K562 (cell line): ENCODE measurements at regions of chr2 and their contacts with region 1.

Region 1: DNA sequence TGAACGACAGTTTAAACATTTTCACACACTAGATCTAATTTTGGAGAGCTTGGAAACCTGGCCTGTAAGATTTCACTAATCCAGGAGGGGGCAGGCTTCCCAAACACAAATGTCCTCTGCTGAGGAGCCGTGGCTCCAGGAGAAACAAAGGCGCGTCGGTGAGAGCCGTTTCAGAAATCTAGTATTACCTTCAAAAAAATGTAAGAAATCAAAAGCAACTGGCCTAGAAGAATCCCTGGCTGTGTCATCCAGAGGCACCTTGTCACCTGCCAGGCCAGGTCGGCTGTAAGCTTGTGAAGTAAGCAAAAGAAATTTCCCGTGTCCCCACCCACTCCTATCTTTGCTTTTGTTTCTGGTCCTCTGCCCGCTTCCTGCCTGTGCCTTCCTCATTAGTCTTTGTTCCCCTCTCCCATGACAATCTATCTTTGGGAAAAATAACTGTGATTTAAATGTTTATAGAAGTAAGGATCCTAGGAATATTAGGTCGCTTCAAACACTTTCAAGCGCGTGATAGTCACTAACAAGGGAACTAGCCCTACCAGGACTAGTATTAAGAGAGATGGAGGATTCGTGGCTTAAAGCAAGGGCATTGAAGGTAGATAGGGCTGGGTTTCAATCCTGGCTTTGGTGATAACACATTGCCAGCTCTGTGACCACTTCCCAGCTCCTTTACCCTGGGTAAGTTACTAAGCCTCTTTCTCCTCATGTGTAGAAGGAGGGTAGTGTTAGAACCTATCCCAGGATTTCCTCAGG is 99.5 kb upstream of the STK39 start:
- DNase-seq: peak; percentile 69 to 84 (median 72)
- ATAC-seq: peak; percentile 91
- H3K4me3 ChIP-seq: peak overlapping the region; percentile 34
- H3K27ac ChIP-seq: no peak overlapping the region
- H3K4me1 ChIP-seq: no peaks in the 10 kb centered on the region; a peak in 1 of 5 replicates
- H3K27me3 ChIP-seq: 0 out of 5 replicates have a peak, but pooled peaks cover under 1 to 4% of the 10 kb centered on the region in 2 experiments
- CTCF ChIP-seq: peak; percentile 78 to 88 (median 83)
- EP300 ChIP-seq: 0 out of 2 replicates have a peak, but pooled peaks have one; percentile 13
- POLR2A ChIP-seq: no peak
- RAD21 ChIP-seq: peak; percentile 96 to 98

Region 2: DNA sequence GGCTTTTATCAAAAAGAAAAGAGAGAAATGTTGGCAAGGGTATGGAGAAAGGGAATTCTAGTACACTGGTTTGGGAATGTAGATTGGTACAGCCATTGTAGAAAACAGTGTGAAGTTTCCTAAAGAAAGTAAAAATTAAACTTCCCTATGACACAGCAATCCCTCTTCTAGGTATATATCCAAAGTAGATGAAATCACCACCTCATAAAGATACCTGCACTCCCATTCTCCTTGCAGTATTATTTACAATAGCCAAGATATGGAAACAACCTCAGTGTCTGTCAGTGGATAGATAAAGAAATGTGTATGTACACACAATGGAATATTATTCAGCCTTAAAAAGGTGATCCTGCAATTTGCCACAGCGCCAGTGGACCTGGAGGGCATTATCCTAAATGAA is 308.3 kb after region 1 on chr2:
- CTCF ChIA-PET with region 1: no interaction called
- POLR2A ChIA-PET with region 1: no interaction called
- in situ Hi-C with region 1: no loop called
- intact Hi-C with region 1: no loop called
- DNase-seq: no peak
- ATAC-seq: no peak
- H3K4me3 ChIP-seq: no peak overlapping the region
- H3K27ac ChIP-seq: no peak overlapping the region
- H3K4me1 ChIP-seq: no peaks in the 10 kb centered on the region
- H3K27me3 ChIP-seq: no peaks in the 10 kb centered on the region
- CTCF ChIP-seq: no peak
- EP300 ChIP-seq: no peak
- POLR2A ChIP-seq: no peak
- RAD21 ChIP-seq: no peak

Region 3: GRCh38 chr2:168687314-168687713 is 340.4 kb after region 1 on chr2:
- CTCF ChIA-PET with region 1: no interaction called
- POLR2A ChIA-PET with region 1: no interaction called
- in situ Hi-C with region 1: no loop called
- intact Hi-C with region 1: loop called (anchors 2 kb)
- DNase-seq: no peak
- ATAC-seq: no peak
- H3K4me3 ChIP-seq: no peak overlapping the region
- H3K27ac ChIP-seq: no peak overlapping the region
- H3K4me1 ChIP-seq: peaks cover 3 to 17% of the 10 kb centered on the region in 2 experiments; a peak in 4 of 5 replicates
- H3K27me3 ChIP-seq: no peaks in the 10 kb centered on the region
- CTCF ChIP-seq: peak in 1 of 3 experiments; percentile 41; a peak in 2 of 6 replicates
- EP300 ChIP-seq: no peak
- POLR2A ChIP-seq: no peak
- RAD21 ChIP-seq: peak; percentile 38 to 48; a peak in 3 of 4 replicates

Region 4: DNA sequence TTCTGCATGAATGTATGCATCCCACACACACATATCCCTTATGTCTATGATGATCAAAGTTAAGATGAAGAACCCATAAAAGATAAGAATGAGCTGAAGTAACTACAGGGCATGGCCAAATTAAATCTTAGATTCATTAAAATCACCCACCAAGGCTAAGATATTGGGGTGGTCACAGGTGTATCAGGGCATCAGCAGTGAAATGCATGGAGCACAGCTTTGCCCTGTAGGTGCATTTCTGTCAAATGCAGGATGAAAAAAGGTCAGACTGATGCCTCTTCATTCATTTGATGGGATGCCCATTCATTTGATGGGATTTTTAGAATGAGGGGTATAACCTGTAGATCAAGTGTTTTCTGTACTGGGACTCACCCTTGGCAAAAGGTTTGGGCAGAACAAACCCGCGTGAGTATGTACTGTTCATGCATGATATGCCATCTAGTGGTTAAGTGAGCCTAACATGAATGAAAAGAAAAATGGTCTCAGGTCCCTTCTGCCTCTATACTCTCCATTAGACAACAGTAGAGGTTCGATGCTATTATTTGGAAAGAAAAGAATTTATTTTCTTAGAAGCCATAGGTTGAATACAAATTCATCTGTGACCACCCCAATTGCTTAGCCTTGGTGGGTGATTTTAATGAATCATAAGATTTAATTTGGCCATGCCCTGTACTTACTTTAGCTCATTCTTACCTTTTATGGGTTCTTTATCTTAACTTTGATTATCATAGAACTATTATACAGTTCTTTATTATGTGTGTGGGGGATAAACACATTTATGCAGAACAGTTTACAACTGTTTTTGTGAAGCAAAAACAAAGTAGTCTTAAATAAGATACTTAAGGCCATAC is 412.3 kb after region 1 on chr2:
- CTCF ChIA-PET with region 1: interaction called, 6 read pairs
- POLR2A ChIA-PET with region 1: no interaction called
- in situ Hi-C with region 1: loop called (anchors 5 kb)
- intact Hi-C with region 1: loop called (anchors 1 kb)
- DNase-seq: peak in 2 of 4 experiments; percentile 54 to 64
- ATAC-seq: peak; percentile 89
- H3K4me3 ChIP-seq: no peak overlapping the region
- H3K27ac ChIP-seq: no peak overlapping the region
- H3K4me1 ChIP-seq: peaks cover 5 to 18% of the 10 kb centered on the region in 2 experiments; a peak in 4 of 5 replicates
- H3K27me3 ChIP-seq: no peaks in the 10 kb centered on the region
- CTCF ChIP-seq: peak; percentile 58 to 79 (median 66)
- EP300 ChIP-seq: no peak
- POLR2A ChIP-seq: no peak
- RAD21 ChIP-seq: peak; percentile 90 to 94

Region 5: DNA sequence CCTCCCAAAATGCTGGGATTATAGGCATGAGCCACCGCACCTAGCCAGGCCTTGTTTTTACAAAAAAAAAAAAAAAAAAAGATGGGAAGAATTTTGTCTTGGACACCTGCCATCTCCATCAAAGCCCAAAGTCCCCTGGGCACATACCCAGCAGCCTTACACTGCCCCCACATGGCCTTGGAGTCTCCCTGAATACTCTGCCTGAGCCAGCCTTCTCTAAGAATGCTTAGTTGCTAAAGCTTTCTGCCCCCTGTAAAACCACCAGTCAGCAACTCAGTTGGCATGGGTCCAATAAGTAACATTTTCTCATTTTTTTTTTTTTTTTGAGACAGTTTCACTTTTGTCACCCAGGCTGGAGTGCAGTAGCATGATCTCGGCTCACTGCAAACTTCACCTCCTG is 502.7 kb after region 1 on chr2:
- CTCF ChIA-PET with region 1: no interaction called
- POLR2A ChIA-PET with region 1: no interaction called
- in situ Hi-C with region 1: no loop called
- intact Hi-C with region 1: loop called (anchors 1 kb)
- DNase-seq: peak; percentile 47 to 66 (median 59)
- ATAC-seq: peak; percentile 44
- H3K4me3 ChIP-seq: no peak overlapping the region
- H3K27ac ChIP-seq: no peak overlapping the region
- H3K4me1 ChIP-seq: peaks cover 12 to 37% of the 10 kb centered on the region in 2 experiments
- H3K27me3 ChIP-seq: no peaks in the 10 kb centered on the region; a peak in 1 of 5 replicates
- CTCF ChIP-seq: peak; percentile 44 to 71 (median 52)
- EP300 ChIP-seq: 0 out of 2 replicates have a peak, but pooled peaks have one; percentile 11
- POLR2A ChIP-seq: no peak
- RAD21 ChIP-seq: peak; percentile 51 to 58

Region 6: DNA sequence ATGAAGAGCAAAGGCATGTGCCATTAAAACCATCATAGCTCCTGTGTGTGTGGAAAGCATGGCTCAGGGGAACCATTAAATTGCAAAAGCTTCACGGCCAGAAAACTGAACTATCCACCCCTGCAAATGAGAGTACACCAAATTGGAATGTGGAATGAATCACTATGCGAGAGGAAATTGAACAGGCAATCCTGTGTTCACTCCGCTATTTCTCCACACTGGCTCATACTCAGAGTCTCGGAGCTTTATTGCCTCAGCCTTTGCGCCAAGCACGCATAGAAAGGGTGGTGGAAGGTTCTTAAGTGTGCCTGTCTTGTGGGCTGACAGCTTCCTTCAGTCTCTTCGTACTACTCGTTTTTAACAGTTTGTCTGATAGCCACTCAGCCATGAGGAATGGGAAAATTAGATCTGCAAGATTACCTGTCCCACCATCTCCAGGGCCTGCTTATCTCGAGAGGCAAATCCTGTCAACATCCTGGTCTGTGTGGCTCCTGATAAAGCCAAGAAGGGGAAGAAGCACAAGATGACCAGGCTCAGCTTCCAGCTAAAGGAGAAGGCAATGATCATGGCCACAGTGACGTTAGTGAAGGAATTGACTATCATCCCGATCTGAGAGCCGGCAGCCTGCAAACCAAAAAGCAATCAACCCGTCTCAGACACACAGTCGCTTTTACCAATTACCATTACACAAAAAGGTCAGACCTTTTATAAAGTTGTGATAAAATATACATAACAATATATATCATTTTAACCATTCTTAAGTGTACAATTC is 589.1 kb after region 1 on chr2:
- CTCF ChIA-PET with region 1: no interaction called
- POLR2A ChIA-PET with region 1: no interaction called
- in situ Hi-C with region 1: no loop called
- intact Hi-C with region 1: loop called (anchors 5 kb)
- DNase-seq: peak; percentile 76 to 96 (median 85)
- ATAC-seq: peak; percentile 91
- H3K4me3 ChIP-seq: peak overlapping the region; percentile 1; the same call in 1 of the 2 replicates
- H3K27ac ChIP-seq: peak overlapping the region; percentile 78
- H3K4me1 ChIP-seq: peaks cover 5 to 53% of the 10 kb centered on the region in 2 experiments
- H3K27me3 ChIP-seq: no peaks in the 10 kb centered on the region
- CTCF ChIP-seq: peak in 1 of 3 experiments; percentile 8; a peak in 2 of 6 replicates
- EP300 ChIP-seq: peak; percentile 100
- POLR2A ChIP-seq: no peak
- RAD21 ChIP-seq: peak; percentile 34

Region 7: DNA sequence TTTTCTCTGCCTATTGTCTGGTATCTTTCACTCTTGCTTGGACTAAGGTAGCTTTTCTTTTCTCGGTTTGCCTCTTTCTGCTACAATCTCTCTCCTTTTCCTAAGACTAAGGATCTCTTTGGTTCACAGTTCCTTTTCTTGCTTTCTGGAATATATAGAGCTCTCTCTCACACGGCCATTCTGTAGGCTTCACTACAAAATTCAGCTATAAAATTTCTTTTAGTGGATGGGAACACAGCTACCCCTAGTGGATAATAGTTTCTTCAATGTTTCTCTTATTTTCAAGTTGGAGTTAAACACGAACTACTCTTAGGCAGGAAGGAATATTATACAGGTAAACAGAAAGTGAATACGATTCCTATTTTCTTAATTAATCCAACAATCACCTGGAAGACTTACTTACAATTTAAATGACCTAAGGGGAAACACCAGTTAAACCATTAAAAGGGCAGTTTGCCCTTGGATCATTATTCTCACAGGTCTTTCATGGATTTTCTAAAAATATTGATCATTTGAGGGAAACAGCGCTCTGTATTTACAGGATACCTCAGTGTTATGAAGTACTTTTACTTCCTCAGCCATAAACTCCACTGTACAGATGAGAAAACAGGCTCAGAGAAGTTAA is 875.0 kb after region 1 on chr2:
- CTCF ChIA-PET with region 1: no interaction called
- POLR2A ChIA-PET with region 1: no interaction called
- in situ Hi-C with region 1: loop called (anchors 10 kb)
- intact Hi-C with region 1: loop called (anchors 5 kb)
- DNase-seq: peak; percentile 24 to 71 (median 42)
- ATAC-seq: peak; percentile 87
- H3K4me3 ChIP-seq: no peak overlapping the region
- H3K27ac ChIP-seq: no peak overlapping the region
- H3K4me1 ChIP-seq: peaks cover 0 to 2% of the 10 kb centered on the region in 2 experiments; a peak in 1 of 5 replicates
- H3K27me3 ChIP-seq: no peaks in the 10 kb centered on the region
- CTCF ChIP-seq: peak; percentile 57 to 84 (median 63); a peak in 5 of 6 replicates
- EP300 ChIP-seq: no peak
- POLR2A ChIP-seq: no peak
- RAD21 ChIP-seq: peak; percentile 93 to 95